ENCODE measurements at regions of chr5 and their contacts with region 1.

Region 1: DNA sequence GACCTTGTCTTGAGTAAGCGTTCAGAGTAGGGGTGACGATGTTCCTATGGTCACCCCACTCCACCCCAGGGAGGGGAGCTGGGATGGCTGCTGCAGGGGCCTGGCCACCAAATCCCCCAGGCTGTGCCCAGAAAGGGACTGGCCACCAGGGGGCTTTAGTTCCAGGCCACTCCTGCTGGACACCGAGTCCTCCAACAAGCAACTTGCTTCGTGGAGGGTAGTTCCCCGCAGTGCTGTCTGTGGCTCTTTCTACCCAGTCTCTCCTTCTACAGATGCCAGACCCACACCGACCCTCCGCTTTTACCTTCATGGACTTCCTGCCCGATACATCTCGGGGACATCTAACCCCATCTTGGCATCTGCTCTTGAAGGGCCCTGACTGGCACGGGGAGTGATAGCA is 35.7 kb upstream of the GABRP start:
- DNase-seq: peak in 3 of 42 donors; percentile 9 to 44 (median 27)

Region 2: GRCh38 chr5:170681013-170681433 is 66.8 kb before region 1 on chr5:
- intact Hi-C with region 1: no loop called
- DNase-seq: peak in 27 of 42 donors; percentile 2 to 47 (median 17)

Region 3: DNA sequence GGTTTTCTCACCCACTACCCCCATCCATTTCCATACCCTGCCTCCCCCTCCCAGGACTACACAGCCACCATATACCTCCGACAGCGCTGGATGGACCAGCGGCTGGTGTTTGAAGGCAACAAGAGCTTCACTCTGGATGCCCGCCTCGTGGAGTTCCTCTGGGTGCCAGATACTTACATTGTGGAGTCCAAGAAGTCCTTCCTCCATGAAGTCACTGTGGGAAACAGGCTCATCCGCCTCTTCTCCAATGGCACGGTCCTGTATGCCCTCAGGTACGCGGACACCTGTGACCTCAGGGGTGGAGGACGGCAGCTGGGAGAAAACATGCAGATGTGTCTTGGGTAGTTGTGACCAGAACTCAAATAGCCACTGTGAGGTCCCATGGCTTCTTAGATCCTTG is 47.3 kb after region 1 on chr5:
- intact Hi-C with region 1: no loop called
- DNase-seq: no peak

Region 4: DNA sequence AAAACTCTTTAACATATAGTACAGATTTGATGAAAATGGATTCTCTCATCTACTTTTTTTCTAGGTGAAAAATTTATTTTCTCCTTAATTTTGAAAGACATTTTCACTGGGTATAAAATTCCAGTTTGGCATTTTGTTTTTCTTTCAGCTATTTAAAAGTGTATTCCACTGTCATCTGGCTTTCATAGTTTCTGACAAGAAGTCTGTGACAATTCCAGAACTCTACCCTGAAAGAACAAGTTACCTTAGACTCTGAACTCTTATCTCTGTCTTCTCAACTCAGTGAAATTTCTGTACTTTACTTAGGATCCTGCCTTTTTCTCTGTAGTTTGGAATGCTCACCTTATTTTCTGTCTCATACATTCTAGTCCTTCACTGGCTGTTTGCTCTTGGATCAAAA is 275.7 kb after region 1 on chr5:
- intact Hi-C with region 1: no loop called
- DNase-seq: no peak

Region 5: DNA sequence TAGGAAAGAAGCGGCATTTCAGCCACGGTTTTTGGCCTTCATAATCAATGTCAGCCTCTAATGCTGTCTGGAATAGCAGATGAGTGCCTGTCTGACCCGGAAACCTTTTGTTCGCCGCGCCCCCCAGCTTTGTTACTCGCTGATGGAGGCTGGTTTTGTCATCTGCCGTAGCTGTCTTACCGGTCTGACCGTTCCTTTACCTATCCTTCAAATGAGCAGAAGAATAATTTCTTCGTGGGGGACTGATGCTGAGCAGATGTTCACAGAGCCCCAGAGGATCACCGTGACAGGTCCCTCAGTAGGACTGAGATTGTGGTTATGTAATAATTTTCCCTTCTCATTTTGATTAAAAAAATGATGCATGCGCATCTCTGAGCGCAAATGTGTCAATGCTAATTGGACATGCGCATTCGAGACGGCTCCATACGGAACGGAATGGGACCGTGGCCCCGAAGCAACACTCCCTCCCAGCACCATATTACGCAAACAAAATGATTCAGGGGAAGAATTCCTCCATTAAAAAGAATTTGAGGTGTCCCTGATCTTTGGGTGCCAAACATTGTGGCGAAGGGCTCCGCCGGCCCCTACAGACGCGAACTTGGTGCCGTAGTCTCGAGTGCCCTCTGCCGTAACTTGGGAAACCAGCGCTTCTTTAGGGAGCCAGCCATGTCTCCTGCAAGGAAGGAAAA is 588.8 kb after region 1 on chr5:
- intact Hi-C with region 1: loop called (anchors 10 kb)
- DNase-seq: peak; percentile 12 to 74 (median 55)

Region 6: GRCh38 chr5:171351536-171352073 is 603.8 kb after region 1 on chr5:
- intact Hi-C with region 1: no loop called
- DNase-seq: no peak

Measured in head of caudate nucleus (tissue), 42 donors.